Activated CD4-positive, alpha-beta memory T cell treated with anti-CD3 and anti-CD28 coated beads for 36 hours (primary cell): ENCODE measurements at regions of chr17 and their contacts with region 1.

Region 1: GRCh38 chr17:39235555-39236449 is 10.1 kb upstream of the STAC2 start:
- DNase-seq: peak; percentile 73
- H3K4me3 Mint-ChIP-seq: no peak overlapping the region
- H3K27ac Mint-ChIP-seq: no peak overlapping the region
- H3K4me1 Mint-ChIP-seq: peaks cover 29% of the 10 kb centered on the region
- H3K27me3 Mint-ChIP-seq: peaks cover 11% of the 10 kb centered on the region

Region 2: GRCh38 chr17:39199820-39200069 is 36.1 kb before region 1 on chr17:
- CTCF ChIA-PET with region 1: interaction called, 580 read pairs
- POLR2A ChIA-PET with region 1: interaction called, 15 read pairs
- intact Hi-C with region 1: no loop called
- DNase-seq: peak; percentile 93
- H3K4me3 Mint-ChIP-seq: peak overlapping the region; percentile 95
- H3K27ac Mint-ChIP-seq: peak overlapping the region; percentile 97
- H3K4me1 Mint-ChIP-seq: peaks cover 59% of the 10 kb centered on the region
- H3K27me3 Mint-ChIP-seq: no peaks in the 10 kb centered on the region

Region 3: GRCh38 chr17:39209317-39210092 is 26.3 kb before region 1 on chr17:
- CTCF ChIA-PET with region 1: interaction called, 580 read pairs
- POLR2A ChIA-PET with region 1: interaction called, 10 read pairs
- intact Hi-C with region 1: loop called (anchors 2 kb)
- DNase-seq: peak; percentile 83
- H3K4me3 Mint-ChIP-seq: no peak overlapping the region
- H3K27ac Mint-ChIP-seq: no peak overlapping the region
- H3K4me1 Mint-ChIP-seq: peaks cover 27% of the 10 kb centered on the region
- H3K27me3 Mint-ChIP-seq: no peaks in the 10 kb centered on the region